ENCODE measurements at regions of chr10 and their contacts with region 1.

Region 1: DNA sequence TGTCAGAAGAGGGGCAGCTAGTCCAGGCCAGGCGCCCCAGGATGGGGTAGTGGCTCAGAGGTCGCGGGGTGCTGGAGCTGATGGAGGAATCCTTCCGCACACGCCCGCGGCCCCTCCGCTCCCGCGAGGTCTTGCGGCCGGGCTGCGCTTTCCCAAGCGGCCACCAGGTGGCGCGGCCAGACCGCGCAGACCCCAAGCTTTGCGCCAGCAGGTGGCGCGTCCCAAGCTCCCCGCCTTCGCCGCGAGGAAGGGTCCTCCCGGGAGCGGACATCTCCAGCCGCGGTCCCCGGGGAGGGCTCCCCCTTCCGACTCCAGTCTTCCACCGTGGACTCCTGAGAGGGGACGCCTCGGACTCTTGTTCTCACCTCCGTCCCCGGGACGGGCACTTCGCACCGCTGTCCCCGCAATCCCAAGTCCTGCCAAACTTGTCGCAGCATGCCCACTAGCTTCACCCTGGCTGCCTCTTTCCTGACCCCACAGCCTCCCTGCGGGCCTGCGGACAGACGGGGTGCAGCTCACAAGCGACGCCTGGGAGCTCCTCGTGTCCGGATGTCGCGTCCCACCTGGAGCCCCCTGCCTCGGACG is 19.4 kb downstream of the KCNK18 start:
- DNase-seq: peak; percentile 64
- H3K4me3 Mint-ChIP-seq: peak overlapping the region; percentile 70
- H3K27ac Mint-ChIP-seq: no peak overlapping the region
- H3K4me1 Mint-ChIP-seq: no peaks in the 10 kb centered on the region
- H3K27me3 Mint-ChIP-seq: peaks cover 35% of the 10 kb centered on the region

Region 2: DNA sequence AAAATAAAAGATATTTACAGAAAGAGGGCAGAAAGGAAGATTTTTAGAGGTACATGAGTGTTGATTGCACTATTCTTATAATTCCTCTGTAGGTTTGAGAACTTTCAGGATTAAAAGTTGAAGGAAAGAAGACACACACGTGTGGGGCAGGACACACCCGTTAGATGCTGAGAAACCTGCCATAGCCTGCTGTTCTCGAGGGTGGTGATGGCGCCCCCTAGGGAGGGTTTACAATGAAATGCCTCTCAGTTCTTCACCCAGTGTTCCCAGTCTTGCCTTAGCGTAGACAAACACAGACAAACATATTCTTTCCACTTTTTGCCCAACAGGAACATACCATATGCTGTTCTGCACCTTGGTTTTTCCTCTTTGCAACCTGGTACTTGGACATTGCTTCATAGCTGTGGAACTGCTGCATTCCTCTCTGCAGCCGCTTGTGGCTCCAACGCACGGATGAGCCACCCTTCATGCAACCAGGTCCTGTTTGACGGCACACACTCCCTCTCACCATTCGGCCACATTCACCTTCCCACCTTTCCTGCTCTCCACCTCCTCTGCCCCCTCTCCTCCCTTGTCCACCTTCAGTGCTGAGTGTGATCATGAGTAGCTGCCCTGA is 451.0 kb before region 1 on chr10:
- CTCF ChIA-PET with region 1: no interaction called
- intact Hi-C with region 1: no loop called
- DNase-seq: peak; percentile 66
- H3K4me3 Mint-ChIP-seq: no peak overlapping the region
- H3K27ac Mint-ChIP-seq: no peak overlapping the region
- H3K4me1 Mint-ChIP-seq: no peaks in the 10 kb centered on the region
- H3K27me3 Mint-ChIP-seq: peaks cover 50% of the 10 kb centered on the region

Region 3: DNA sequence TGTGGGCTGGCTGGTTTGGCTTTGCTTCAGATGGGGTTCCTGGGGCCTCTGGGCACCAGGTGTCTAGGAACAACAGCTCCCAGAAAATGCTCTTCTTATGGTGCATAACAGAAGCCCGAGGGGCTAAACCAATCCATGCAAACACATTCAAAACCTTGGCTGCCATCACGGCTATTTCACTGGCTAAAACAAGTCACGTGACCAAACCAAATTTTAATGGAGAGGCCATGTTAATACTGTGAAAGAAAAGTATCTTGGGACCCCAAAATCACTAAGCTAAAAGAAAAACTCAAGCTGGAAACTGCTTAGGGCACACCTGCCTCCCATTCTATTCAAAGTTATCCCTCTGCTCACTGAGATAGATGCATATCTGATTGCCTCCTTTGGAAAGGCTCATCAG is 38.5 kb before region 1 on chr10:
- CTCF ChIA-PET with region 1: no interaction called
- intact Hi-C with region 1: no loop called
- DNase-seq: no peak
- H3K4me3 Mint-ChIP-seq: no peak overlapping the region
- H3K27ac Mint-ChIP-seq: no peak overlapping the region
- H3K4me1 Mint-ChIP-seq: peaks cover 15% of the 10 kb centered on the region
- H3K27me3 Mint-ChIP-seq: peaks cover 6% of the 10 kb centered on the region

Region 4: GRCh38 chr10:117198088-117198487 is 18.6 kb before region 1 on chr10:
- CTCF ChIA-PET with region 1: interaction called, 10 read pairs
- intact Hi-C with region 1: no loop called
- DNase-seq: no peak
- H3K4me3 Mint-ChIP-seq: no peak overlapping the region
- H3K27ac Mint-ChIP-seq: no peak overlapping the region
- H3K4me1 Mint-ChIP-seq: no peaks in the 10 kb centered on the region
- H3K27me3 Mint-ChIP-seq: peaks cover 4% of the 10 kb centered on the region

Region 5: GRCh38 chr10:117226824-117227451 is 10.2 kb after region 1 on chr10:
- CTCF ChIA-PET with region 1: interaction called, 20 read pairs
- intact Hi-C with region 1: no loop called
- DNase-seq: peak; percentile 28
- H3K4me3 Mint-ChIP-seq: no peak overlapping the region
- H3K27ac Mint-ChIP-seq: no peak overlapping the region
- H3K4me1 Mint-ChIP-seq: no peaks in the 10 kb centered on the region
- H3K27me3 Mint-ChIP-seq: peaks cover 35% of the 10 kb centered on the region

Region 6: GRCh38 chr10:117284716-117285494 is 68.2 kb after region 1 on chr10:
- CTCF ChIA-PET with region 1: interaction called, 11 read pairs
- intact Hi-C with region 1: no loop called
- DNase-seq: no peak
- H3K4me3 Mint-ChIP-seq: no peak overlapping the region
- H3K27ac Mint-ChIP-seq: no peak overlapping the region
- H3K4me1 Mint-ChIP-seq: peaks cover 2% of the 10 kb centered on the region
- H3K27me3 Mint-ChIP-seq: no peaks in the 10 kb centered on the region

Region 7: DNA sequence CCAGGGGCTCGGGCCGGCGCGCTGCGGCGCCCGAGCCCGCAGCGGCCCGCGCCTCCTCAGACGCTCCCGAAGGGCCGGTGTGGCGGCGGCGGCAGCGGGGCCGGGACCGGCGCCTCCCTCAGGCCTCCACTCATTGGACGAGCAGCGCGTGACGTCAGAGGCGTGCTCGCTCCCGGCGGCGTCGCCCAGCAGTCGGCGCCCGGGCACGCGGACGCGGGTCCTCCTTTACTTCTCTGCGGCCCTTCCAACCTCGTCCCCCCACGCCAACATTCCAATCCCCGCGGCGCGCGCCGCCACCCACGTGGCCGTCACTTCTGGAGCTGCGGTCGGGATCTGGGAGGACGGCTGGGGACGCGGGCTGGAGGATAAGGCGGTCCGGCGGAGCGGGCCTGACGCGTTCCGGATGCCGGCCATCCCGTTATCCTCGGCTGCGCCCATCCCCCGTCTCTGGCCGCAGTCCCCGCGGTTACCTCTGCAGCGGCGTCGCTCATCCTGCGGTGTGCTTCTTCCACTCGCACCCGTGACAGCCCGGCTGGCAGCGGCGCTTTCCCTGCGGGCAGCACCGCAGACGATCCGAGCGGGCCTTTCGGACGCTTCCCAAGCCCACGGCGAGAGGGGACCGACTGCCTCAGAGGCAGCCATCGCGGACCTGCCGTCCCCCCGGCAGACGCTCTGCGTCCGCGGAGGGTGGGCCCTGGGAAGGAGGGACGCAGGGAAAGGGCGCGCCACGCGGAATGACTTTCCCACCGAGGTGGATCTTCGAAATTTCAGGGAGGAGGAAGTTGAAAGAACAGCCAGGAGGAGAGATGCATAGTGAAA is 158.9 kb after region 1 on chr10 and contains the start of gene PDZD8:
- CTCF ChIA-PET with region 1: interaction called, 5 read pairs
- intact Hi-C with region 1: loop called (anchors 1 kb)
- DNase-seq: peak; percentile 85
- H3K4me3 Mint-ChIP-seq: peak within 1 kb of the TSS; percentile 94
- H3K27ac Mint-ChIP-seq: peak within 1 kb of the TSS; percentile 68
- H3K4me1 Mint-ChIP-seq: peaks cover 19% of the 10 kb centered on the region
- H3K27me3 Mint-ChIP-seq: peaks cover 18% of the 10 kb centered on the region
- total RNA-seq, gene PDZD8: 13.6 to 15.8 TPM

Region 8: GRCh38 chr10:117537436-117537903 is 320.8 kb after region 1 on chr10:
- CTCF ChIA-PET with region 1: interaction called, 3 read pairs
- intact Hi-C with region 1: loop called (anchors 2 kb)
- DNase-seq: no peak
- H3K4me3 Mint-ChIP-seq: no peak overlapping the region
- H3K27ac Mint-ChIP-seq: no peak overlapping the region
- H3K4me1 Mint-ChIP-seq: peaks cover 22% of the 10 kb centered on the region
- H3K27me3 Mint-ChIP-seq: peaks cover 71% of the 10 kb centered on the region

Measured in activated naive CD4-positive, alpha-beta T cell treated with anti-CD3 and anti-CD28 coated beads for 36 hours (primary cell).